ENCODE measurements at regions of chr17 and their contacts with region 1.

Region 1: DNA sequence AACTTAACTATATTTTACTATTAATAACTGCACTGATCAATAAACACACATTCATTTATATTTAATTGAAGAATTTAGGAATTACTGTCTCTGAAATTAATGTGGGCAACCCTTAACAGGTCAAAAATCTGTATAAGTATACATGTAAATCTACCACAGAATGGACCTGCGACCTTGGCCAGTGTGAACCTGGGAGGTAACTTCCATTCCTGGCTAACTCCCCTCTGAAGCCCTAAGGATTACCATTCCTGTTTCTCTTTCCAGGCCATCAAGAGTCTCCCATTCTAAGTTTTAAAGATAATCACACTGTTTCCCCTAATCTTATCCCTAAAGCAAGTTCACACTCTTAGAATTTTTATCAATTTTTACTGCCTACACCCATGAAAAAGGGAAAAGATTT is 58.1 kb downstream of the SMURF2 start:
- DNase-seq: no peak
- ATAC-seq: no peak
- H3K4me3 ChIP-seq: no peak overlapping the region
- H3K27ac ChIP-seq: no peak overlapping the region
- H3K4me1 ChIP-seq: peaks cover 8% of the 10 kb centered on the region; the same call in 2 of the 3 replicates
- CTCF ChIP-seq: no peak
- EP300 ChIP-seq: no peak
- POLR2A ChIP-seq: no peak
- RAD21 ChIP-seq: no peak

Region 2: GRCh38 chr17:64554028-64554637 is 49.9 kb before region 1 on chr17:
- CTCF ChIA-PET with region 1: no interaction called
- POLR2A ChIA-PET with region 1: no interaction called
- DNase-seq: no peak
- ATAC-seq: peak in 1 of 2 experiments; percentile 55; a peak in 3 of 6 replicates
- H3K4me3 ChIP-seq: no peak overlapping the region
- H3K27ac ChIP-seq: no peak overlapping the region
- H3K4me1 ChIP-seq: no peaks in the 10 kb centered on the region
- CTCF ChIP-seq: no peak
- EP300 ChIP-seq: no peak
- POLR2A ChIP-seq: no peak
- RAD21 ChIP-seq: no peak

Region 3: DNA sequence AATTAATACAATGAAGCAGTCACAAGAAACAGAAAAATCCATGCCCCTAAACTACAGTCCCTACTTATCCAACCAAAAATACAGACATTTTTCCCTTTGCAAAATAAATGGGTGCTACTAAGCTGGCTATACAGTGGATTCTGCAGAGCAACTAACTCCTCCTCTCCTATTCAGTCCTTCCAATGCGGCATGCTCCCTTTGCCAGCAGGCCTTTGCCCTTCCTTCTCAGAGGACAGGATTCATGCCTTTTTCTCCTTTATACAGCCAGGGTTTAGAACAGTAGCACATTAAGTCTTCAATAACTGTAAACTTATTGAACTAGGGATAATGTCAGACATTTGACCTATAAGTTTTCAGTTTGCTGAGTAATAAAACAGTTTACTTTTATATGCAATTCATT is 12.0 kb before region 1 on chr17:
- CTCF ChIA-PET with region 1: interaction called, 10 read pairs
- POLR2A ChIA-PET with region 1: no interaction called
- DNase-seq: no peak
- ATAC-seq: no peak; a peak in 1 of 6 replicates
- H3K4me3 ChIP-seq: no peak overlapping the region
- H3K27ac ChIP-seq: no peak overlapping the region
- H3K4me1 ChIP-seq: no peaks in the 10 kb centered on the region
- CTCF ChIP-seq: no peak
- EP300 ChIP-seq: no peak
- POLR2A ChIP-seq: no peak
- RAD21 ChIP-seq: no peak

Region 4: GRCh38 chr17:64728041-64728751 is 124.2 kb after region 1 on chr17:
- CTCF ChIA-PET with region 1: no interaction called
- POLR2A ChIA-PET with region 1: no interaction called
- DNase-seq: no peak
- ATAC-seq: no peak
- H3K4me3 ChIP-seq: no peak overlapping the region
- H3K27ac ChIP-seq: peak overlapping the region; percentile 3 to 68; a peak in 3 of 6 replicates
- H3K4me1 ChIP-seq: peaks cover 48% of the 10 kb centered on the region
- CTCF ChIP-seq: no peak
- EP300 ChIP-seq: no peak
- POLR2A ChIP-seq: no peak
- RAD21 ChIP-seq: no peak

Measured in A549 (cell line).